Mammary epithelial cell (primary cell): ENCODE measurements at regions of chr1 and their contacts with region 1.

Region 1: GRCh38 chr1:201222125-201222524 is 31.5 kb downstream of the IGFN1 start:
- DNase-seq: no peak
- H3K4me3 ChIP-seq: no peak overlapping the region
- H3K27ac ChIP-seq: no peak overlapping the region
- H3K4me1 ChIP-seq: no peaks in the 10 kb centered on the region
- H3K27me3 ChIP-seq: no peaks in the 10 kb centered on the region
- CTCF ChIP-seq: no peak

Region 2: DNA sequence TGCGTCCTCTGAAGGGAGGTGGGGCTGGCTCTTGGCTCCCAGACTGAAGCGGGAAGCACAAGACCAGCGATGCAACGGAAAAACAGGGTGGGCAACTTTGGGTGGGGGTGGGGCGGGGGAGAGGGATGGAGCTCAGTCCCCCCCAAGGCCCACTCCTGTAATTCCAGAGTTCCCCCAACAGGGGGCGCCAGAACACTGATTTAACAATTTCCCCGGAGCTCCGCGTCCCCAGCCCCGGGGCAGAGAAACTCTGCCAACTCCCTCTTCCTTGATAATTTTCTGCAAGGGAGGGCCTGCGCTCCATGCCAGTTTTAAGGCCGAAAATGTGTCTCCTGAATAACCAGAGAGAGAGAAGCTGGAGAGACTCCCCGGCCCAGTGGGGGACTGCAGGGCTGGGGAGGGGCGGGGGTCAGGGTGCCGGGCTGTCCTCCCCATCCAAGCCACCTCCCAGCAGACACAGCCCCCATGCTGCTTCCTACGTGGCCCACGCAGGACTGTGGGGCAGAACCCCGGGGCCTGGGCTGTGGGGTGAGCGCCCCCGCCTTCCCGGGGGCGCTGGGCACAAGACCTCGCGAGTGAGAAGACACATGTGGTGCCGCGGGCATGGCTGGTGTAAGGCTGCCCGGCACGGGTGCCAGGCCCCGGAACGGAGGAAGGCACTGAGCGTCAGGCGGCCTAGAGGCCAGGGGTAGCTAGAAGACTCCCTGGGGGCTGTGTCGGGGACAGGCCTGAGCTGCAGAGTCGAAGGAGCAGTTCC is 250.0 kb before region 1 on chr1:
- CTCF ChIA-PET with region 1: no interaction called
- dilution Hi-C with region 1: no loop called
- in situ Hi-C with region 1: no loop called
- intact Hi-C with region 1: loop called (anchors 2 kb)
- DNase-seq: peak; percentile 6
- H3K4me3 ChIP-seq: no peak overlapping the region
- H3K27ac ChIP-seq: no peak overlapping the region
- H3K4me1 ChIP-seq: no peaks in the 10 kb centered on the region
- H3K27me3 ChIP-seq: no peaks in the 10 kb centered on the region
- CTCF ChIP-seq: peak; percentile 37 to 70

Region 3: GRCh38 chr1:201085916-201086735 is 136.0 kb before region 1 on chr1:
- CTCF ChIA-PET with region 1: no interaction called
- dilution Hi-C with region 1: no loop called
- in situ Hi-C with region 1: no loop called
- intact Hi-C with region 1: loop called (anchors 1 kb)
- DNase-seq: peak; percentile 34
- H3K4me3 ChIP-seq: no peak overlapping the region
- H3K27ac ChIP-seq: no peak overlapping the region
- H3K4me1 ChIP-seq: peaks cover 17% of the 10 kb centered on the region
- H3K27me3 ChIP-seq: no peaks in the 10 kb centered on the region
- CTCF ChIP-seq: peak; percentile 55 to 85

Region 4: DNA sequence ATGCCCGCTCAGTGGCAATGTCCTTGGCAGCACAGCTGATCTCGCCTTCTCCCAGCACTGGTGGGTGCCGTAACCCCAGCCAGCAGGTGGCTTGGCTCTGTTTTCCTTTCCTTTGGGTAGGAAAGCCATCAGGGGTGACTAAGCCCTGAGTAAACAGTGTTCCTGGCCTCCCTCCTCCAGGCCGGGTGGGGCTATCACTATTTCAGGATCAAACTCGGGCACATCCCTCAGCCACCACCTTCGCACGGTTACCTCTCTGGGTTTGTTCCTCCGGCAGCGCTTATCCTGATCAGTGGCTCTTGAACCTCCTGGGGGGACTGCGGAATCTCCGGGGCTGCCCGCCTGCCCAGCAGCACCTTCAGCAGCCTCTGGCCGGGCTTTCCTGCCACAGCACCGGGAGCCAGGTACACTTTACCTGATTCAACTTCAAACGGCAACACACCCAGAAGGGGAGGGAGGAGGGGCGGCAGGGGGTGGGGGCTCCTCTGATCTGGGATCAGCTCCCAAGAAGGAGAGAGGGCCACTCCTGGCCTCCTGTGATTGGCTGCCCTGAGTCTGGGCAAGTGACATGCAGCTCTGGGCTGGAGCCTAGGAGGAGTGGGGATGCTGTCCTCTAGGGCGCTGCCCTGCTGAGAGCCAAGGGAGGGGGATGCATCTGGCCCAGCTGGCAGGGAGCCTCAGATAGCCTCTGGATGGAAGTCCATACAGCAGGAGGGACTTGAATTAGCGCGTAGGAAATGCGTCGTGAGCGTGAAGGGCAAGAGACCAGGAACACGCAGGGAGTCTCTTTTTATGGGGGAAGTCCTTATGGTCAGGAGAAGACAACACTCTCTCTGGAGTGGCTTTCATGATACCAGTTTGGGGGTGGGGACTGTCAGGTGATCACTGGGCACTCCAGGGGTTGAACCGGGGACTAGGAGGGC is 95.0 kb before region 1 on chr1 and contains the start of gene ASCL5:
- CTCF ChIA-PET with region 1: no interaction called
- dilution Hi-C with region 1: no loop called
- in situ Hi-C with region 1: no loop called
- intact Hi-C with region 1: loop called (anchors 1 kb)
- DNase-seq: peak; percentile 63
- H3K4me3 ChIP-seq: no peak within 1 kb of the TSS
- H3K27ac ChIP-seq: no peak within 1 kb of the TSS
- H3K4me1 ChIP-seq: peaks cover 4% of the 10 kb centered on the region
- H3K27me3 ChIP-seq: no peaks in the 10 kb centered on the region
- CTCF ChIP-seq: peak; percentile 2 to 39
- total RNA-seq, gene ASCL5: not detected

Region 5: GRCh38 chr1:201149400-201149799 is 72.7 kb before region 1 on chr1:
- CTCF ChIA-PET with region 1: no interaction called
- dilution Hi-C with region 1: no loop called
- in situ Hi-C with region 1: loop called in 1 of 2 experiments (anchors 10 kb)
- intact Hi-C with region 1: loop called (anchors 1 kb)
- DNase-seq: no peak
- H3K4me3 ChIP-seq: no peak overlapping the region
- H3K27ac ChIP-seq: no peak overlapping the region
- H3K4me1 ChIP-seq: peaks cover 7% of the 10 kb centered on the region
- H3K27me3 ChIP-seq: no peaks in the 10 kb centered on the region
- CTCF ChIP-seq: peak; percentile 56 to 58

Region 6: GRCh38 chr1:201170533-201171062 is 51.5 kb before region 1 on chr1:
- CTCF ChIA-PET with region 1: no interaction called
- dilution Hi-C with region 1: no loop called
- in situ Hi-C with region 1: no loop called
- intact Hi-C with region 1: loop called (anchors 2 kb)
- DNase-seq: peak; percentile 92
- H3K4me3 ChIP-seq: peak overlapping the region; percentile 44 to 50 (median 45)
- H3K27ac ChIP-seq: peak overlapping the region; percentile 36
- H3K4me1 ChIP-seq: peaks cover 28% of the 10 kb centered on the region
- H3K27me3 ChIP-seq: no peaks in the 10 kb centered on the region
- CTCF ChIP-seq: no peak

Region 7: GRCh38 chr1:201206176-201206575 is 15.9 kb before region 1 on chr1:
- CTCF ChIA-PET with region 1: no interaction called
- dilution Hi-C with region 1: no loop called
- in situ Hi-C with region 1: no loop called
- intact Hi-C with region 1: no loop called
- DNase-seq: no peak
- H3K4me3 ChIP-seq: no peak overlapping the region
- H3K27ac ChIP-seq: no peak overlapping the region
- H3K4me1 ChIP-seq: no peaks in the 10 kb centered on the region
- H3K27me3 ChIP-seq: peaks cover 4% of the 10 kb centered on the region
- CTCF ChIP-seq: no peak